B cell (primary cell): ENCODE measurements at regions of chr15 and their contacts with region 1.

Region 1: DNA sequence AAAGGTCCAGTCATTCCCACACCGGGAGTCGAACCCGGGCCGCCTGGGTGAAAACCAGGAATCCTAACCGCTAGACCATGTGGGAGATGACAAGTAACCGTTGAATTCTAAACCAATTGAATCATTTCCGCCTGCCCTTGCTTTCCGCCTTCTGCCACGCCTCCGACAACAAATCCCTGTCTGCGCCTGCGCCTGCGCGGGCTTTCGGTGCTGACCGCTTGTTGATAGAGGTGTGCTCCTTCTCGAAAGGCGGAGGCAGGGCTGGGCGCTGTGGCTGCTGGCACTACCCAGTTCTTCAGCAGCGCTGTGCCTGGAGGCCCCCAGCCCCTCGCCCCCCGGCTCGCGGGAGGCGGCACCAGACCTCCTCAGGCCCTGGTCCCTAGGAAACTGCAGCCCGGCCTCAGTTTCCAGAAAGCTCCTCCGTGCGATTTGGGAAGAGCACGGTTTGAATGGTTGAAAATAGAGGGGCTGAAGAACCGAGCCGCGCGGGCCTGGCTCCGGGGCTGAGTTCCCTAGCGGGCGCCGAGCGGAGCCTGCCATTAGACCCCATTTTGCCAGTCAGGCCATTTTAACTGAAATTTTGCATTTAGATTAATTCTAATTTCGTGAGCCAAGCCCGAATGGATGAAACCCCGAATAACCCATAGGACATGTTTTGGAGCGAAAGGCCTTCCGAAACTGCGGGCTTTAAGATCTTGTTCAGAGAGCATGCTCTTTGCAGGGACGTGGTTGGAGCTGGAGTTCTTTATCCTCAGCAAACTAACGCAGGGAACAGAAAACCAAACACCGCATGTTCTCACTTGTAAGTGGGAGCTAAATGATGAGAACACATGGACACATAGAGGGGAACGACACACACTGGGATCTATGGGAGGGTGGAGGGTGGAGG is 219.3 kb upstream of the ATP10A start:
- DNase-seq: peak; percentile 94
- ATAC-seq: peak; percentile 94
- H3K4me3 ChIP-seq: peak overlapping the region; percentile 60 to 86 (median 75)
- H3K4me3 Mint-ChIP-seq: peak overlapping the region; percentile 91
- H3K27ac ChIP-seq: peak overlapping the region; percentile 76 to 79
- H3K27ac Mint-ChIP-seq: peak overlapping the region; percentile 99
- H3K4me1 ChIP-seq: peaks cover 16 to 18% of the 10 kb centered on the region in 2 donors
- H3K4me1 Mint-ChIP-seq: peaks cover 34% of the 10 kb centered on the region
- H3K27me3 ChIP-seq: no peaks in the 10 kb centered on the region
- H3K27me3 Mint-ChIP-seq: no peaks in the 10 kb centered on the region
- CTCF ChIP-seq: no peak

Region 2: GRCh38 chr15:24956111-24956838 is 1126.2 kb before region 1 on chr15:
- CTCF ChIA-PET with region 1: no interaction called
- POLR2A ChIA-PET with region 1: no interaction called
- intact Hi-C with region 1: loop called (anchors 10 kb)
- DNase-seq: peak; percentile 78
- ATAC-seq: peak; percentile 71
- H3K4me3 ChIP-seq: peak overlapping the region; percentile 78 to 93 (median 81)
- H3K4me3 Mint-ChIP-seq: peak overlapping the region; percentile 90
- H3K27ac ChIP-seq: peak overlapping the region; percentile 74
- H3K27ac Mint-ChIP-seq: peak overlapping the region; percentile 95
- H3K4me1 ChIP-seq: peaks cover 11 to 18% of the 10 kb centered on the region in 2 donors
- H3K4me1 Mint-ChIP-seq: peaks cover 31% of the 10 kb centered on the region
- H3K27me3 ChIP-seq: no peaks in the 10 kb centered on the region
- H3K27me3 Mint-ChIP-seq: no peaks in the 10 kb centered on the region
- CTCF ChIP-seq: no peak

Region 3: GRCh38 chr15:25450163-25450562 is 632.3 kb before region 1 on chr15:
- CTCF ChIA-PET with region 1: no interaction called
- POLR2A ChIA-PET with region 1: no interaction called
- intact Hi-C with region 1: no loop called
- DNase-seq: no peak
- ATAC-seq: no peak
- H3K4me3 ChIP-seq: no peak overlapping the region
- H3K4me3 Mint-ChIP-seq: no peak overlapping the region
- H3K27ac ChIP-seq: no peak overlapping the region
- H3K27ac Mint-ChIP-seq: no peak overlapping the region
- H3K4me1 ChIP-seq: no peaks in the 10 kb centered on the region
- H3K4me1 Mint-ChIP-seq: no peaks in the 10 kb centered on the region
- H3K27me3 ChIP-seq: no peaks in the 10 kb centered on the region
- H3K27me3 Mint-ChIP-seq: no peaks in the 10 kb centered on the region
- CTCF ChIP-seq: no peak

Region 4: DNA sequence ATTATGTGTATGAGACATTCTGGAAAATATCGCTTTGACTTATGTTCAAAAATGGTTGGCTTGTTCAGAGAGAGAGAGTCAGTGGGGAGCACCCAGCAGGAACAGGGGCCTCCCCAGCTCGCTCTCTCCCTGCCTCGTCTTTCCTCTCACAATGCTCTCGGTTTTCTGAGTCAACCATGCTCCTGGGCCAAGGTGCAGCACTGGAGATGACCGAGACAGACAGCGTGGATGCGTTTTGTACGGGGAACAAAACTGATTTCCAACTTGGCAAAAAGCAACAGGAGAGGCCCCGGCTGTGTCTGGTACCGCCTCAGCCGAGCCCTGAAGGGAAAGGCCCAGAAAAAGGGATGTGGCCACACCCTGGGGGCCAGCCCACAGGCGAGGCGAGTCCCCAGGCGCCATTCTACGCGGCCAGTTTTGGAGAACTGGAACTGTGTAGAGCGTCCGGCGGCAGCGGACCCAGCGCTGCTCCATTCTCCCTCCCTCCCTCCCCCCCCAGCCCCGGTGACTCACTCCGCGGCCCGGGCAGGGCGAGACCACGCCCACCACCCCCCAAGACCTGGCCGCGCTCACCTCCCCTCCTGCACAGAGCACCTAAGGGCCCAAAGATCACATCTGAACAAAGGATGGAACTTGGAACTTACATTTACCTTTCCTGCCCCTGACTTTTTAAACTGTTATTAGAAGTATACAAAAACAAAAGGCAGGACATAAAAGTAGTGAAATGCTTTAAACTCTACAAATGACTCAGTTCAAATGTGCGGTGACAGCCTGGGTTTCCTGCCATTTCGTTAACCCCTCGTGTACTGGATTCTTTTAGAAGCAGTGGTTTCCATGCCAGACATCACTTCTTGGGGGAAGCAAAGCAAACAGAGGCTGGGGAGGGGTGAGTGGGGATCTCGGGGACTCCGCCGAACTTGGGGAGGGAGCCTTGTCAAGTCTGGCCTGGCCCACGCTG is 232.0 kb before region 1 on chr15:
- CTCF ChIA-PET with region 1: no interaction called
- POLR2A ChIA-PET with region 1: no interaction called
- intact Hi-C with region 1: loop called (anchors 1 kb)
- DNase-seq: peak; percentile 76
- ATAC-seq: peak; percentile 86
- H3K4me3 ChIP-seq: peak overlapping the region in 4 of 5 experiments; percentile 30 to 47 (median 44)
- H3K4me3 Mint-ChIP-seq: peak overlapping the region; percentile 80
- H3K27ac ChIP-seq: peak overlapping the region; percentile 57
- H3K27ac Mint-ChIP-seq: peak overlapping the region; percentile 80
- H3K4me1 ChIP-seq: peaks cover 39 to 50% of the 10 kb centered on the region in 2 donors
- H3K4me1 Mint-ChIP-seq: peaks cover 59% of the 10 kb centered on the region
- H3K27me3 ChIP-seq: no peaks in the 10 kb centered on the region
- H3K27me3 Mint-ChIP-seq: peaks cover 3% of the 10 kb centered on the region
- CTCF ChIP-seq: no peak

Region 5: GRCh38 chr15:25939122-25939521 is 143.3 kb before region 1 on chr15:
- CTCF ChIA-PET with region 1: no interaction called
- POLR2A ChIA-PET with region 1: no interaction called
- intact Hi-C with region 1: loop called (anchors 5 kb)
- DNase-seq: peak; percentile 79
- ATAC-seq: peak; percentile 96
- H3K4me3 ChIP-seq: no peak overlapping the region
- H3K4me3 Mint-ChIP-seq: peak overlapping the region; percentile 11
- H3K27ac ChIP-seq: peak overlapping the region; percentile 12 to 28
- H3K27ac Mint-ChIP-seq: peak overlapping the region; percentile 69
- H3K4me1 ChIP-seq: peaks cover 23 to 29% of the 10 kb centered on the region in 2 donors
- H3K4me1 Mint-ChIP-seq: peaks cover 33% of the 10 kb centered on the region
- H3K27me3 ChIP-seq: no peaks in the 10 kb centered on the region
- H3K27me3 Mint-ChIP-seq: no peaks in the 10 kb centered on the region
- CTCF ChIP-seq: no peak

Region 6: GRCh38 chr15:27418726-27419125 is 1336.3 kb after region 1 on chr15:
- CTCF ChIA-PET with region 1: no interaction called
- POLR2A ChIA-PET with region 1: no interaction called
- intact Hi-C with region 1: no loop called
- DNase-seq: no peak
- ATAC-seq: no peak
- H3K4me3 ChIP-seq: no peak overlapping the region
- H3K4me3 Mint-ChIP-seq: no peak overlapping the region
- H3K27ac ChIP-seq: no peak overlapping the region
- H3K27ac Mint-ChIP-seq: no peak overlapping the region
- H3K4me1 ChIP-seq: no peaks in the 10 kb centered on the region
- H3K4me1 Mint-ChIP-seq: no peaks in the 10 kb centered on the region
- H3K27me3 ChIP-seq: no peaks in the 10 kb centered on the region
- H3K27me3 Mint-ChIP-seq: no peaks in the 10 kb centered on the region
- CTCF ChIP-seq: no peak